ENCODE measurements at regions of chr1 and their contacts with region 1.

Region 1: GRCh38 chr1:42924082-42924850 is 34.4 kb downstream of the SLC2A1 start:
- DNase-seq: peak; percentile 95
- ATAC-seq: peak; percentile 93
- H3K4me3 Mint-ChIP-seq: peak overlapping the region; percentile 90
- H3K27ac Mint-ChIP-seq: peak overlapping the region; percentile 95
- H3K4me1 Mint-ChIP-seq: peaks cover 60% of the 10 kb centered on the region
- H3K27me3 Mint-ChIP-seq: no peaks in the 10 kb centered on the region

Region 2: DNA sequence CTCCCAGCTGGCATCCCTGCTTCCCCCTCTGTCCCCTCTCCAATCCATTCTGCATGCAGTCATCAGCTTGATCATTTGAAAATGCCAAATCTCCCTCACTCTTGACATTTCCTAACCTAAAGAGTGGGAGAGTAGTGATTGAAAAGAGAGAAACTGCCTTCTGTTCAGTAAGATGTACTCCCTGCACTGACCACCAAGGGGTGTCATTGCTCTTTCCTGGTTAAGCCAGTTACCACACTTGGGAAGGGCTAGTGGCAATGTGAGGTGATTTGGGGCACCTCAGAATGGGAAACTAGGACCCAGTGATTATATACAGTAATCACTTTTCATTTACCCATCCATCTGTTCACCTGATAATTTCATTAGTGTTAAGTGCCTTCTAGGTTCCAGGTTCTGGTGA is 146.4 kb before region 1 on chr1:
- CTCF ChIA-PET with region 1: interaction called, 35 read pairs
- POLR2A ChIA-PET with region 1: interaction called, 3 read pairs
- DNase-seq: peak; percentile 44
- ATAC-seq: peak; percentile 47
- H3K4me3 Mint-ChIP-seq: no peak overlapping the region
- H3K27ac Mint-ChIP-seq: peak overlapping the region; percentile 53
- H3K4me1 Mint-ChIP-seq: peaks cover 36% of the 10 kb centered on the region
- H3K27me3 Mint-ChIP-seq: no peaks in the 10 kb centered on the region

Region 3: GRCh38 chr1:42913426-42914091 is 10.7 kb before region 1 on chr1:
- CTCF ChIA-PET with region 1: interaction called, 34 read pairs
- POLR2A ChIA-PET with region 1: interaction called, 3 read pairs
- DNase-seq: peak; percentile 77
- ATAC-seq: peak; percentile 76
- H3K4me3 Mint-ChIP-seq: no peak overlapping the region
- H3K27ac Mint-ChIP-seq: no peak overlapping the region
- H3K4me1 Mint-ChIP-seq: peaks cover 12% of the 10 kb centered on the region
- H3K27me3 Mint-ChIP-seq: peaks cover 8% of the 10 kb centered on the region

Region 4: DNA sequence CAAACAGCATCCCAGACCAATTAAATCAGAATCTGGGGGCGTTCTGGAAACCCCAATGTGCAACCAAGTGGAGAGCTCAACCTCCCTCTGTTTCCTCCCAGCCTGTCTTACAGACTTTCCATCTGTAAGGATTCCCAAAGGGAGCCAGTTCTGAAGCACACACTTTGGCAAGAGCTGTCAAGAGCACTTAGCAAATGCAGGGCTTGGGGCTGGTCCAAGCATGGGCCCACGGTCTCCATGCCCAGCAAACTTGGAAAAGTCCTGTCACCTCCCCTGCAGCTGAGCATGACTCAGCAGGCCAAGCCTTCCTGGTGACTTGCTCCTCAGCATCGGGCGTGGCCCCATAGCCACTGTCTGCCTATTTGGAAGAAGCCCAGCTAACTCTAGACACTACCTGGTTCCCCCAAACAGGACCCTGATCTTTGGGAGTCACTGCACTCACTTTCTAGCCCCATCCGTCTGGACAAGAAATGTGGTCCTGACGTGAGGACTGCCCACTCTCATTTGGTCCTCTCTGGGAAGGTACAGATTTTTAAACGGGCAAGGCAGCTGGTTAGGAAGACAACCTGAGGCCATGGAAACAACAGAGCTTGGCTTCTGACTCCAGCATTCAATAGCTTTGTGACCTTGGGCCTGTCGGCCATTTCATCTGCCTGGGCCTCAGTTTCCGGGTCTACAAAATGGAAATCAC is 17.5 kb after region 1 on chr1:
- CTCF ChIA-PET with region 1: interaction called, 22 read pairs
- POLR2A ChIA-PET with region 1: interaction called, 5 read pairs
- DNase-seq: no peak
- ATAC-seq: no peak
- H3K4me3 Mint-ChIP-seq: no peak overlapping the region
- H3K27ac Mint-ChIP-seq: peak overlapping the region; percentile 86
- H3K4me1 Mint-ChIP-seq: peaks cover 98% of the 10 kb centered on the region
- H3K27me3 Mint-ChIP-seq: no peaks in the 10 kb centered on the region

Region 5: GRCh38 chr1:42958488-42959319 is 34.4 kb after region 1 on chr1 and contains the start of gene SLC2A1:
- CTCF ChIA-PET with region 1: interaction called, 86 read pairs
- POLR2A ChIA-PET with region 1: interaction called, 23 read pairs
- DNase-seq: peak; percentile 97
- ATAC-seq: peak; percentile 88
- H3K4me3 Mint-ChIP-seq: peak within 1 kb of the TSS; percentile 99
- H3K27ac Mint-ChIP-seq: peak within 1 kb of the TSS; percentile 96
- H3K4me1 Mint-ChIP-seq: peaks cover 63% of the 10 kb centered on the region
- H3K27me3 Mint-ChIP-seq: peaks cover 7% of the 10 kb centered on the region
- total RNA-seq, gene SLC2A1: 113 to 123 TPM

Region 6: DNA sequence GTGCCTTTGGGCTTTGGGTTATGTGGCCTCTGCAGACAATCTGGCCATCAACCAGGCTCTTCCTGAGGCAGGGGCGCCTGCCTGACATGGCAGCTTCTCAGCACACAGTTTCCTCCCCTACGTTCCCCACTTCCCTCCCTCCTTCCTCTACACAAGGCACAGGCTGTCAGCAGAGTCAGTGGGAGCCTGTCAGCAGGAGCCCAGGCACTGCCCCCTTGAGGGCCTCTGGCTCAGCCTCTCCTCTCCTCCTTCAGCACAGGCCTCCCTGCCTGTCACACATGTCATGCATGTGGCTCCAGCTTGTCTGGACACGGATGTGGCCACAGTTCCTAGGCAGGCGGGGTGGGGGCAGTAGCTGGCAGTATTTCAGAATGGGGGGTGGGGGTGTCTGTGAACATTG is 957.1 kb after region 1 on chr1:
- CTCF ChIA-PET with region 1: no interaction called
- POLR2A ChIA-PET with region 1: no interaction called
- DNase-seq: no peak
- ATAC-seq: no peak
- H3K4me3 Mint-ChIP-seq: no peak overlapping the region
- H3K27ac Mint-ChIP-seq: peak overlapping the region; percentile 6
- H3K4me1 Mint-ChIP-seq: peaks cover 2% of the 10 kb centered on the region
- H3K27me3 Mint-ChIP-seq: no peaks in the 10 kb centered on the region

Measured in activated CD8-positive, alpha-beta T cell treated with anti-CD3 and anti-CD28 coated beads, Interleukin-2, amount 10 ng/mL, durations not matched to agents 7 days and 5 days (primary cell).